ENCODE measurements at regions of chr4 and their contacts with region 1.

Region 1: DNA sequence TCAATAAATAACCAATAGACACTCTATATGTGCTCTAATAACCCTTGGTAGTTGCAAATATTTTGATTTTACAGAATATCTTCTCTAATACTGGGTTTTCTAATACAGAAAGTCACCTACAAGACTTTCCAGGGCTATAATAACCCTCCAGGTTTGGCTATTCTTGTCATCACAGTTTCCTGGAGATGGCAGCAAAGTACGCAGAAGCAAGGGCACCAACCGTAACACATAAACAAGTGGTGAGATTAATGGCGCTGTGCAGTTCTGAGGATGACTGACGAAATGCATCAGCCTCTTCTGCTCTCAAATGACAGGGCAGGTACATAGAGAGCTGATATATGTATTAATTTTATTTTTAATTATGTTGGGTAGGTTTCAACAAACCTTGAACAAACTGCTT is 122.4 kb downstream of the C4orf33 start:
- DNase-seq: peak in 1 of 4 experiments; percentile 8
- ATAC-seq: peak; percentile 63; the same call in 2 of the 3 replicates
- H3K4me3 ChIP-seq: no peak overlapping the region
- H3K27ac ChIP-seq: no peak overlapping the region
- H3K4me1 ChIP-seq: no peaks in the 10 kb centered on the region
- H3K27me3 ChIP-seq: no peaks in the 10 kb centered on the region
- CTCF ChIP-seq: peak; percentile 14 to 43 (median 30); a peak in 3 of 6 replicates
- EP300 ChIP-seq: no peak
- POLR2A ChIP-seq: no peak
- RAD21 ChIP-seq: peak; percentile 34 to 35

Region 2: DNA sequence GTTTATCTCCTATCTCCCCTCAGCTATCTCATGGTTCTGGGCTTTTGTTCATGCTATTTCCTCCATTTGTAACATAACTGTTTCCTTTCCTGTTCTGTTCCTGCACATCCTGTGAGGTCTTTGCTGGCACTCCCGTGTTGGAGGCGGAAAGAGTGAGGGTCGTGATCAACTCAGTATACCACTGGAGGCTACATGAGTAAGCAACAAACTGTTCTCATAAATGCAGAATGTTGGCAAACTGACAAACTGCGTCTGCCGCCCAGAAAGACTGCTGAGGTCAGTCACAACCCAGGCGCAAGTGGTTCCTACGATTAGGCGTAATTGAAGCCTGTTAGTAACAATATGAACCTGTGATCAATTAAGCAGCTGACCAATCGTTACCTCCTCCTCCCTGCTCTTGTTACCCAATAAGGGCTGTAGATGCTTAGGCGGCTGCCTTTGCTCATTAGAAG is 73.6 kb before region 1 on chr4:
- CTCF ChIA-PET with region 1: no interaction called
- POLR2A ChIA-PET with region 1: no interaction called
- in situ Hi-C with region 1: no loop called
- intact Hi-C with region 1: no loop called
- DNase-seq: peak in 2 of 4 experiments; percentile 10 to 52
- ATAC-seq: peak; percentile 57
- H3K4me3 ChIP-seq: peak overlapping the region; percentile 11
- H3K27ac ChIP-seq: peak overlapping the region; percentile 41; the same call in 2 of the 3 replicates
- H3K4me1 ChIP-seq: peaks cover 4% of the 10 kb centered on the region in 2 experiments; a peak in 3 of 5 replicates
- H3K27me3 ChIP-seq: no peaks in the 10 kb centered on the region
- CTCF ChIP-seq: no peak
- EP300 ChIP-seq: no peak
- POLR2A ChIP-seq: no peak
- RAD21 ChIP-seq: no peak

Region 3: DNA sequence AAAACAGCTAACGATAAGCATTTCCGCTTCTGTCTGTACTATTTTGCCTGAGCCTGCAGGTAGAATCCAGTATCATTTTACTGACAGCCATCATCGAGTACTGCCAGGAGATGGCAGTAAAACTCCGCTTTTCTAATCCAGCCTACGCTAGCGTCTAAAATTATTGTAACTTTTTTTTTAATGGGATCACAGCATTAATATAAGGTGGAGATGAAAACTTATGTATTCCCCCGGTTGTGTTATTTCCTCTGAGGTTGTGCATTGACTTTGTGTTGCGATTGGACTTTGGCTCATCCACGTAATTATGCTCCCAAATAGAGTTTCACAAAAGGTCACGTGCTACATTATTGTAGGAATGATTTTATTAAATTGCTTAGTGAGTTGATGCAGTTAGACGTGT is 125.7 kb after region 1 on chr4:
- CTCF ChIA-PET with region 1: no interaction called
- POLR2A ChIA-PET with region 1: no interaction called
- in situ Hi-C with region 1: no loop called
- intact Hi-C with region 1: loop called (anchors 5 kb)
- DNase-seq: peak; percentile 28 to 43 (median 39)
- ATAC-seq: peak; percentile 86
- H3K4me3 ChIP-seq: no peak overlapping the region
- H3K27ac ChIP-seq: no peak overlapping the region
- H3K4me1 ChIP-seq: no peaks in the 10 kb centered on the region
- H3K27me3 ChIP-seq: no peaks in the 10 kb centered on the region
- CTCF ChIP-seq: peak; percentile 41 to 63 (median 62); a peak in 4 of 6 replicates
- EP300 ChIP-seq: no peak
- POLR2A ChIP-seq: no peak
- RAD21 ChIP-seq: peak; percentile 56 to 58

Measured in K562 (cell line).